ENCODE measurements at regions of chr4 and their contacts with region 1.

Region 1: GRCh38 chr4:10535912-10536311 is 78.7 kb upstream of the ZNF518B start:
- DNase-seq: no peak
- H3K4me3 ChIP-seq: no peak overlapping the region
- H3K27me3 ChIP-seq: peaks cover 3% of the 10 kb centered on the region; the same call in 1 of the 2 replicates
- CTCF ChIP-seq: no peak

Region 2: DNA sequence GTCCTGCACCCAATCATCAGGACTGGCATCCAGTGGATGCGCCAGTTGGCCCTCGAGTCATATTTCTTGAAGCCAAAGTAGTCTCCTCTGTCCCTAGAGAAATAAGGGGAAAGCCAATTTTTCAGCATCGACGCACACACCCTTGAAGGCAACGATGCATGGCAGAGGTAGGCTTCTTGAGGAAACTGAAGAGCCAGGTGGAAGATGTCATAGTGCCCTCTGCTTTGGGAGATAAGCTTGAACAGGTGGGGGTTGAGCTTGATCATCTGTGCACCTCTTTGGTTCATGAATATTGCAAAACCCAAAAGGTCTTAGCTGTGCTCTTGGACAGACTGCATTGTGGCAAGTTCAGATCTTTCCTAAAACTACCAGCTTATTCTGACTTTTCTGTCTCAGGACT is 384.7 kb before region 1 on chr4:
- CTCF ChIA-PET with region 1: interaction called, 13 read pairs
- POLR2A ChIA-PET with region 1: no interaction called
- DNase-seq: no peak
- H3K4me3 ChIP-seq: no peak overlapping the region
- H3K27me3 ChIP-seq: peaks cover 8% of the 10 kb centered on the region
- CTCF ChIP-seq: no peak

Region 3: DNA sequence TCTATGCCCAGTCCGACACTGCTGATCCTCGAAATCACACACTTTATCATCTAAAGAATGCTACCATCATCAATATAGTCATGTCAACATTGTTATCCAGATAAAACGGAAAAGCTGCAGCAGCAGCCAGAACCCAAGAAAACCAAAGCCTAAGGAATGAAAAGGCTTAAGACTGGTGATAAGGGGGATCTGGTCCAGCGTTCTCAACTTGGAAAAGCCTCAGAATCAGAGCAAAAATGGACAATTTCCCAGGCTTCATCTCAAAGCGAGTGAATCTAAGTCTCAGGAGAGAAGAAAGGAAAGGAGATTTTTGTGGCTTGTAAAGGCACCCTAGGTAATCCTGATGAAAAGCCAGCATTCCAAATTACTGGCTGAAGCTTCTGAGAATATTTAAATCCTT is 86.9 kb before region 1 on chr4:
- CTCF ChIA-PET with region 1: no interaction called
- POLR2A ChIA-PET with region 1: no interaction called
- DNase-seq: no peak
- H3K4me3 ChIP-seq: no peak overlapping the region
- H3K27me3 ChIP-seq: no peaks in the 10 kb centered on the region
- CTCF ChIP-seq: no peak